OCI-LY7 (cell line): ENCODE measurements at regions of chr1 and their contacts with region 1.

Region 1: GRCh38 chr1:179241523-179242097 is 12.1 kb upstream of the ABL2 start:
- DNase-seq: no peak
- H3K4me3 ChIP-seq: no peak overlapping the region
- H3K27ac ChIP-seq: no peak overlapping the region
- H3K4me1 ChIP-seq: no peaks in the 10 kb centered on the region
- CTCF ChIP-seq: no peak

Region 2: DNA sequence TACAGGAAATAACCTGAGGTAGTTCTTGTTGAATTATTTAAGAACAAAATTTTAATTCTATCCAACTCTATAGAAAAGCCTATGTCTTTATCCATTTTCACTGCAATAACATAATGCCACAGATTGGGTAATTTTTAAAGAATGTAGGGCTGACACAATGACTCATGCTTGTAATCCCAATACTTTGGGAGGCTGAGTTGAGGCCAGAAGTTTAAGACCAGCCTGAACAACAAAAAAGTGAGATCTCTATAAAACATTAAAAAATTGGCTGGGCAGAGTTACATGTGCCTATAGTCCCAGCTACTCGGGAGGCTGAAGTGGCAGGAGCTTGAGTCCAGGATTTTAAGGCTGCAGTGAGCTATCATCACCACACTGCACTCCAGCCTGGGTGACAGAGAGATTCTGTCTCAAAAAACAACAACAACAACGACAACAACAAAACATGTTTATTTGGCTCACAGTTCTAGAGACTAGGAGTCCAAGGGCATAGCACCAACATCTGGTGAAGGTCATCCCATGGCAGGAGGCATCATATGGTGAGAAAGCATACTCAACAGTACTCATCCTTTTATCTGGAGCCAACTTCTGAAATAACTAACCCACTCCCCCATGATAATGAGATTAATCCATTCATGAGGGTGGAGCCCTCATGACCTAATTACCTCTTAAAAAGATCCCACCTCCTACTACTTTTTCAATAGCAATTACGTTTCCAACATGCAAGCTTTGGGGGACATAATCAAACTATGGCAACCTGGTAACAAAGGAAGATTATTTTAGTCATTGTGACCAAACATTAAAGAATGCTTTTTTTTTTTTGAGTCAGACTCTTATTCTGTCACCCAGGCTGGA is 71.8 kb before region 1 on chr1:
- CTCF ChIA-PET with region 1: no interaction called
- POLR2A ChIA-PET with region 1: no interaction called
- intact Hi-C with region 1: no loop called
- DNase-seq: no peak
- H3K4me3 ChIP-seq: no peak overlapping the region
- H3K27ac ChIP-seq: no peak overlapping the region
- H3K4me1 ChIP-seq: peaks cover 17% of the 10 kb centered on the region
- CTCF ChIP-seq: no peak

Region 3: DNA sequence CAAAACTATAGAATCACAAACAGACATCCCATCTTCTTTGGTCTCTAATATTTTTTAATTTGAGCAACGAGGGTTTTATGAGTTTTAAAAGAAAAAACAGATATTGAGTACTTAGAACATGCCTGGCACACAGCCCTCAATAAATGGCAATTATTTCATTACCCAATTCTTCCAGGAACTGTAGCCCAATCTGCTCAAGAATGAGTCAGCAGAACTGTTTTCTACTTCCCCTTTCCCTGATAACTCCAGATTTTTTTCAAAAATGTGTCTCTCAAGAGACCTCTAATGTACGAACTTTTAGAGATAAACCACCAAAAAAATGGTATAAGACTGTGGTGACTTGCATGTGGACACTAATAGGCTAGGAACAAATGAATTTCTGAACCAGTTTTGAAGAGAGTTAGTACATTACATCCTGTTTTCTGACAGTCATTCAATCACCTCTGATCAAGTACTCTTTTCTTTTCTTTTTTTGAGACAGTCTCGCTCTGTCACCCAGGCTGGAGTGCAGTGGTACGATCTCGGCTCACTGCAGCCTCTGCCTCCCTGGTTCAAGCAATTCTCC is 23.6 kb before region 1 on chr1:
- CTCF ChIA-PET with region 1: no interaction called
- POLR2A ChIA-PET with region 1: interaction called, 12 read pairs
- intact Hi-C with region 1: no loop called
- DNase-seq: peak; percentile 8
- H3K4me3 ChIP-seq: no peak overlapping the region
- H3K27ac ChIP-seq: no peak overlapping the region
- H3K4me1 ChIP-seq: peaks cover 9% of the 10 kb centered on the region
- CTCF ChIP-seq: no peak

Region 4: GRCh38 chr1:179831852-179832699 is 590.5 kb after region 1 on chr1:
- CTCF ChIA-PET with region 1: no interaction called
- POLR2A ChIA-PET with region 1: interaction called, 10 read pairs
- intact Hi-C with region 1: no loop called
- DNase-seq: no peak
- H3K4me3 ChIP-seq: no peak overlapping the region
- H3K27ac ChIP-seq: no peak overlapping the region
- H3K4me1 ChIP-seq: no peaks in the 10 kb centered on the region
- CTCF ChIP-seq: no peak